Calu3 (cell line): ENCODE measurements at regions of chr5 and their contacts with region 1.

Region 1: GRCh38 chr5:27928060-27928459 is 889.7 kb upstream of the CDH9 start:
- DNase-seq: no peak
- H3K4me3 Mint-ChIP-seq: no peak overlapping the region
- H3K27ac Mint-ChIP-seq: no peak overlapping the region
- H3K4me1 Mint-ChIP-seq: no peaks in the 10 kb centered on the region
- H3K27me3 Mint-ChIP-seq: no peaks in the 10 kb centered on the region
- CTCF ChIP-seq: no peak

Region 2: GRCh38 chr5:27906911-27907590 is 21.0 kb before region 1 on chr5:
- CTCF ChIA-PET with region 1: no interaction called
- intact Hi-C with region 1: loop called (anchors 1 kb)
- DNase-seq: no peak
- H3K4me3 Mint-ChIP-seq: peak overlapping the region; percentile 6
- H3K27ac Mint-ChIP-seq: peak overlapping the region; percentile 69
- H3K4me1 Mint-ChIP-seq: peaks cover 28% of the 10 kb centered on the region
- H3K27me3 Mint-ChIP-seq: no peaks in the 10 kb centered on the region
- CTCF ChIP-seq: no peak

Region 3: DNA sequence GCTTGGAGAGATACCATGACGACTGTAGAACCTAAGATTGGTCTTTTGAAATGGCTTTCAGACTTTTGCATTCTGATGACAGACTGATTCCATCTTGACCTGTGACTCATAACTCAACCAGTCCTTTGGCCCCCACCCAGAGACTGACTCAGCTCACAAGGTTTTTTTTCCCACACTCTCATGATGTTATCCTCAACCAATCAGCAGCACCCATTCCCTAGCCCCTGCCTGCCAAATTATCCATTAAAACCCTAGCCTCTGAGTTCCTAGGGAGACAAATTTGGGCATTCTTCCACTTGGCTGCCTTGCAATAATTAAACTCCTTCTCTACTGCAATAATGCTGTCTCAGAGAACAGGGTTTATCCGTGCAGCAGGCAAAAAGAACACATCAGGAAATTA is 373.7 kb after region 1 on chr5:
- CTCF ChIA-PET with region 1: no interaction called
- intact Hi-C with region 1: no loop called
- DNase-seq: peak; percentile 53
- H3K4me3 Mint-ChIP-seq: no peak overlapping the region
- H3K27ac Mint-ChIP-seq: peak overlapping the region; percentile 74
- H3K4me1 Mint-ChIP-seq: no peaks in the 10 kb centered on the region
- H3K27me3 Mint-ChIP-seq: no peaks in the 10 kb centered on the region
- CTCF ChIP-seq: no peak